Naive thymus-derived CD4-positive, alpha-beta T cell (primary cell): ENCODE measurements at regions of chr10 and their contacts with region 1.

Region 1: GRCh38 chr10:6542999-6543430 is 37.1 kb downstream of the PRKCQ start:
- DNase-seq: peak in 8 of 9 donors; percentile 45 to 83 (median 78)
- ATAC-seq: peak; percentile 90
- H3K4me3 ChIP-seq: peak overlapping the region; percentile 64
- H3K4me3 Mint-ChIP-seq: peak overlapping the region; percentile 79 to 95 (median 88)
- H3K27ac ChIP-seq: peak overlapping the region; percentile 73
- H3K27ac Mint-ChIP-seq: peak overlapping the region; percentile 97 to 100 (median 99)
- H3K4me1 ChIP-seq: peaks cover 55 to 66% of the 10 kb centered on the region in 2 donors
- H3K4me1 Mint-ChIP-seq: peaks cover 43 to 90% (median 76%) of the 10 kb centered on the region in 7 donors
- H3K27me3 ChIP-seq: no peaks in the 10 kb centered on the region
- H3K27me3 Mint-ChIP-seq: no peaks in the 10 kb centered on the region

Region 2: GRCh38 chr10:6279540-6280267 is 263.3 kb before region 1 on chr10:
- CTCF ChIA-PET with region 1: no interaction called
- POLR2A ChIA-PET with region 1: no interaction called
- intact Hi-C with region 1: no loop called
- DNase-seq: no peak
- ATAC-seq: no peak
- H3K4me3 ChIP-seq: no peak overlapping the region
- H3K4me3 Mint-ChIP-seq: peak overlapping the region in 1 of 10 donors; percentile 63
- H3K27ac ChIP-seq: no peak overlapping the region
- H3K27ac Mint-ChIP-seq: peak overlapping the region in 2 of 9 donors; percentile 58 to 59
- H3K4me1 ChIP-seq: peaks cover 0 to 8% of the 10 kb centered on the region in 2 donors
- H3K4me1 Mint-ChIP-seq: peaks cover 5 to 44% (median 11%) of the 10 kb centered on the region in 7 donors
- H3K27me3 ChIP-seq: no peaks in the 10 kb centered on the region
- H3K27me3 Mint-ChIP-seq: no peaks in the 10 kb centered on the region

Region 3: DNA sequence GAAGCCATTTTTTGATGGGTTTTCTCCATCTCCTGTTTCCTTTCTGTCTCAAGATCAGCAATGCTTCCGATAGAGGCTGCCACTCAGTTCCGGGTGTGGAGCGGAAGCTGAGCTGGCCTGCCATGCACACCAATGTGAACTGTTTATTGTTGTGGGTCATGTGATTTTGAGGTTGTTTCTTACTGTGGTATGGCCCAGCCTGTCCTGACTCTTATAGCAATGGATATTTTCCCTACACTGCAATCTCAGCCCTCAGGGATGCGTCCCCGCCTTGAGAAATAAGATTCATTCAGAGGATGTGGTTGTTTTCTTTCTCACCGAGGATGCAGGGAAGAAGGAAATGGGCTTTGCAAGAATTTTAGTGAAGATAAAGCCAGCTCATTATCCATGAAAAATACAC is 205.6 kb before region 1 on chr10:
- CTCF ChIA-PET with region 1: no interaction called
- POLR2A ChIA-PET with region 1: no interaction called
- intact Hi-C with region 1: no loop called
- DNase-seq: no peak
- ATAC-seq: no peak
- H3K4me3 ChIP-seq: no peak overlapping the region
- H3K4me3 Mint-ChIP-seq: no peak overlapping the region
- H3K27ac ChIP-seq: no peak overlapping the region
- H3K27ac Mint-ChIP-seq: no peak overlapping the region
- H3K4me1 ChIP-seq: no peaks in the 10 kb centered on the region
- H3K4me1 Mint-ChIP-seq: peaks cover 0 to 6% (median 0%) of the 10 kb centered on the region in 7 donors
- H3K27me3 ChIP-seq: no peaks in the 10 kb centered on the region
- H3K27me3 Mint-ChIP-seq: no peaks in the 10 kb centered on the region

Region 4: GRCh38 chr10:6498771-6499170 is 44.2 kb before region 1 on chr10:
- CTCF ChIA-PET with region 1: no interaction called
- POLR2A ChIA-PET with region 1: no interaction called
- intact Hi-C with region 1: loop called (anchors 1 kb)
- DNase-seq: peak in 8 of 9 donors; percentile 48 to 75 (median 67)
- ATAC-seq: peak; percentile 85
- H3K4me3 ChIP-seq: no peak overlapping the region
- H3K4me3 Mint-ChIP-seq: peak overlapping the region; percentile 13 to 86 (median 59)
- H3K27ac ChIP-seq: peak overlapping the region; percentile 36
- H3K27ac Mint-ChIP-seq: peak overlapping the region; percentile 81 to 94 (median 90)
- H3K4me1 ChIP-seq: peaks cover 33 to 49% of the 10 kb centered on the region in 2 donors
- H3K4me1 Mint-ChIP-seq: peaks cover 24 to 47% (median 43%) of the 10 kb centered on the region in 7 donors
- H3K27me3 ChIP-seq: no peaks in the 10 kb centered on the region
- H3K27me3 Mint-ChIP-seq: no peaks in the 10 kb centered on the region

Region 5: DNA sequence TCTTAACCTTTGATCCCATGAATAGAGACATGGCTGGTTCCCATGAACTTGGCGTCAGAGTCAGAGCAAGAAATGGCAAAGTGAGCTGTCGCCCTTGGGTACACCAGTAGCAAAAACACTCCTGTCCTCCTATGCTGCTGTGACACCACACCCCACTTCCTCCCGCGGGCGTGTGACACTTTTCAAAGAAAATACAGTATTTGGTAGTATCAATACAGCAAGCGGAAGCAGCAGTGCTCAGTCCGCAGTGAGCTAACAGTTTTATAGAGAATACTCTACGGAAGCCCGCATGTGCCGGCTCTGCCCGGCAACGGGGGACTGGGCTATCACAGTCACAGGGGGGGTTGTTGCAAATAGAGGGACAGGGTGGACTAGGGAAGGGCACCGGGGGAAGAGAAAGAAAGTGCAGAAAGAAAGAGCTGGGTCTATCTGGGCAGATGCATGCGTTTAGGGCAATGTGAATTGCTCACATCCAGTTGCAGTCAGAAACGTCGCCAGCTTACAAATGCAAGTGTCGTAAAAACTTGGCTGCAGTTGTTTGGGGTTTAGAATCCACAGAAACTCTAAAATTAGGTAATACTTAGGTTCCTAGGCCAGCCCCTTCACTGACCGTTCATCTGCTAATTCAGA is 12.7 kb before region 1 on chr10:
- CTCF ChIA-PET with region 1: interaction called, 6 read pairs
- POLR2A ChIA-PET with region 1: interaction called, 100 read pairs
- intact Hi-C with region 1: loop called (anchors 1 kb)
- DNase-seq: peak; percentile 37 to 89 (median 85)
- ATAC-seq: peak; percentile 96
- H3K4me3 ChIP-seq: peak overlapping the region; percentile 34
- H3K4me3 Mint-ChIP-seq: peak overlapping the region; percentile 84 to 95 (median 88)
- H3K27ac ChIP-seq: peak overlapping the region; percentile 74
- H3K27ac Mint-ChIP-seq: peak overlapping the region; percentile 97 to 100 (median 99)
- H3K4me1 ChIP-seq: peaks cover 46 to 58% of the 10 kb centered on the region in 2 donors
- H3K4me1 Mint-ChIP-seq: peaks cover 67 to 99% (median 91%) of the 10 kb centered on the region in 7 donors
- H3K27me3 ChIP-seq: no peaks in the 10 kb centered on the region
- H3K27me3 Mint-ChIP-seq: no peaks in the 10 kb centered on the region

Region 6: DNA sequence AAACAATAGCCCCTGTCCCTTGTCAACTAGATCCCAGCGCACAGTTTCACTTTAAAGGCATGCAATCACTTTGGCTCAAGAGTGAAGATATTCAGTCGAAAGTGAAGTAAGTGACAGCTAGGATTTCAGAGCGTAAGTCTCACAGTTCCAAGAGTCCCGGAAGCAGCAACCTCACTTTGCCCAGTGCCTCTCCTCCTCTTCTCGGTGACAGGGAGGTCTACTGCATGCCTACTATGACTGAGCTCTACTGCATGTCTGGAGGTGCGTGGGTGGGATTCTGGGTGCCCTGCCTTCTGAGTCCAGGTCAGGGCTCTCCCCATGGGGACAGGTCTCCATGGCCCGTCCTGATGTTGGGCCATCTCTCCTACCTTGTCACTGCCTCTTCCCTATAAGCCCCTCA is 20.1 kb after region 1 on chr10:
- CTCF ChIA-PET with region 1: interaction called, 12 read pairs
- POLR2A ChIA-PET with region 1: interaction called, 36 read pairs
- intact Hi-C with region 1: loop called in 1 of 2 experiments (anchors 1 kb)
- DNase-seq: peak in 4 of 9 donors; percentile 33 to 60 (median 39)
- ATAC-seq: peak; percentile 56
- H3K4me3 ChIP-seq: peak overlapping the region; percentile 42
- H3K4me3 Mint-ChIP-seq: peak overlapping the region; percentile 69 to 89 (median 80)
- H3K27ac ChIP-seq: peak overlapping the region; percentile 46
- H3K27ac Mint-ChIP-seq: peak overlapping the region; percentile 47 to 94 (median 87)
- H3K4me1 ChIP-seq: peaks cover 69 to 73% of the 10 kb centered on the region in 2 donors
- H3K4me1 Mint-ChIP-seq: peaks cover 65 to 96% (median 91%) of the 10 kb centered on the region in 7 donors
- H3K27me3 ChIP-seq: no peaks in the 10 kb centered on the region
- H3K27me3 Mint-ChIP-seq: no peaks in the 10 kb centered on the region

Region 7: GRCh38 chr10:6593241-6593671 is 50.2 kb after region 1 on chr10:
- CTCF ChIA-PET with region 1: interaction called, 3 read pairs
- POLR2A ChIA-PET with region 1: interaction called, 16 read pairs
- intact Hi-C with region 1: loop called (anchors 1 kb)
- DNase-seq: peak in 5 of 9 donors; percentile 29 to 76 (median 61)
- ATAC-seq: peak; percentile 73
- H3K4me3 ChIP-seq: peak overlapping the region; percentile 38
- H3K4me3 Mint-ChIP-seq: peak overlapping the region; percentile 53 to 97 (median 80)
- H3K27ac ChIP-seq: peak overlapping the region; percentile 94
- H3K27ac Mint-ChIP-seq: peak overlapping the region; percentile 96 to 99 (median 97)
- H3K4me1 ChIP-seq: peaks cover 34 to 95% of the 10 kb centered on the region in 2 donors
- H3K4me1 Mint-ChIP-seq: peaks cover 45 to 100% (median 98%) of the 10 kb centered on the region in 7 donors
- H3K27me3 ChIP-seq: no peaks in the 10 kb centered on the region
- H3K27me3 Mint-ChIP-seq: no peaks in the 10 kb centered on the region